Dorsolateral prefrontal cortex (tissue), 120 donors: ENCODE measurements at regions of chr2 and their contacts with region 1.

Region 1: GRCh38 chr2:169363560-169364150 is 1.3 kb upstream of the LRP2 start:
- DNase-seq: peak in 9 of 10 donors; percentile 15 to 62 (median 39)
- H3K4me3 ChIP-seq: peak overlapping the region; percentile 44 to 88 (median 73)
- H3K27ac ChIP-seq: peak overlapping the region in 42 of 59 donors; percentile 2 to 93 (median 66)
- H3K27me3 ChIP-seq: peaks cover 0 to 32% (median 13%) of the 10 kb centered on the region in 45 donors
- CTCF ChIP-seq: peak in 36 of 56 donors; percentile 11 to 59 (median 26)

Region 2: GRCh38 chr2:169221745-169222369 is 141.8 kb before region 1 on chr2:
- intact Hi-C with region 1: loop called in 1 of 2 experiments (anchors 10 kb)
- DNase-seq: no peak
- H3K4me3 ChIP-seq: no peak overlapping the region
- H3K27ac ChIP-seq: peak overlapping the region in 4 of 59 donors; percentile 17 to 37 (median 22)
- H3K27me3 ChIP-seq: no peaks in the 10 kb centered on the region
- CTCF ChIP-seq: peak; percentile 29 to 70 (median 54)

Region 3: DNA sequence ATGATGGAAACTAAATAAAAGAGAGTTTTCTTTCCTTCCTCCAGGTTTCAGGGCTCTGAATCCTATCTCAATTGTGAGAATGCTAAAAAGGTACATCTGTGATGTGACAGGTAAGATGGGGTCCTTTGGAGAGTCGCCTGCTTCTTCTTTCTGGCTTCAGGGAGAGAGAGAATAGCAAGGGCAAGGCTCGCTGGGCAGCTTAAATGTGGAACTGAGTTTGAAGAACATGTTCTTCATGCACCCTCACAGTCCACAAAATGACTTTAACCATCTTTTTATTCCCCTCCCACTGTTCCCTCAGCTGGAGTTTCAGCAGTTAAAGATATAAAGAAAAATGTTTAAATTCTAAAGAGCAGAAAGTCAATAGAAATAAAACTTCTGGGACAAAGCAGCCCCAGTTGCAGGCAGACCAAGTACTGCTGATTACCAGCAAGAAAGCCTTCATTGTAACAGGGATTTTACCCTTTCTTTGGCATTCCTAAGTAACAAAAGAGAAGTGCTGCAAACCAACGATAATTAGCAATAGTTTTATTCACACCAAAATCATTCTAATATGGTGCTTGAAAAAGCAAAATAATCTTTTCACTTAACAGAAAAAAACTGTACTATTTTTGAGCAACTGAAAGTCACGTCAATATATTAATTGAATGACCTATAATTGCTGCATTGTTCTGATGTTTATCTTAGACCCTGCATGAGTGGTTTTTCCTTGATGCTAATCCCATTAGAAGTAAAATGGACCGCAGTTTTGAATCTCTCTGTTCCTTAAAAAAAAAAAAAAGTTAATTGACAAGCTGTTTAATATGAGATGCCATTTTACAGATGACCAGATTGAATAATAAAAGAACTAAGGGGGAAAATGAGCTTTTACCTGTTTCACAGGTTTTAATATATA is 62.8 kb before region 1 on chr2:
- intact Hi-C with region 1: loop called in 1 of 2 experiments (anchors 5 kb)
- DNase-seq: no peak
- H3K4me3 ChIP-seq: peak overlapping the region in 24 of 59 donors; percentile 2 to 35 (median 13)
- H3K27ac ChIP-seq: peak overlapping the region in 58 of 59 donors; percentile 15 to 94 (median 80)
- H3K27me3 ChIP-seq: peaks cover 0 to 9% (median 0%) of the 10 kb centered on the region in 45 donors
- CTCF ChIP-seq: no peak